ENCODE measurements at regions of chr1 and their contacts with region 1.

Region 1: DNA sequence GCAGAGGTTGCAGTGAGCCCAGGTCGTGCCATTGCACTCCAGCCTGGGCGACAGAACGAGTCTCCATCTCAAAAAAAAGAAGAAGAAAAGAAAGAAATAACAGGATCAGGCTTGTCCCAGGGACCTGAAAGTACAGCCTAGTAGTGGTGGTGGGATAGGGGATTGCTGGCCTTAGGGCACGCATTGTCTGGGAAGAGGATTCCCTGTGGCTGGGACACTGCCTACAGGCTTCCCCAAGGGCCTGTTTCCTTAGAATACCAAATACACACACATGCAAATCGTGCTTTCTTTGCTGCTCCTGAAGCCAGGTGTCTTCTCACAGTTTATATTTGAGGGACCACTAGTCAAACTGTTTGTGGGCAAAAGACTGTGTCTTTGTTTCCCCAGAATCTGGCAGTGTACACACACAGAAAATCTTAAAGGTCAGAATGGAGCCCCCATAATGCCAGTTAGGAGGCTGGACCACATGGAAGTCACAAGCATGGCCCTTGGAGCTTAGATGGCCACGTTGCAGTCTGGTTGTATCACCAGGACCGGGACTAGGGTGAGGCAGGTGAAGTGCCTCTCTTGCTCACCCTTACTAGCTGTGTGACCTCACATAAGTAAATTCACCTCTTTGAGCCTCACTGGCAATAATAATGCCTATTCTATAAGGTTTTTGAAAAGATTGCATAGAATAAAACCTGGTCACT is 12.7 kb upstream of the ASAP3 start:
- DNase-seq: no peak
- ATAC-seq: peak; percentile 55 to 70; a peak in 5 of 6 replicates
- H3K4me3 ChIP-seq: no peak overlapping the region
- H3K27ac ChIP-seq: no peak overlapping the region
- H3K4me1 ChIP-seq: no peaks in the 10 kb centered on the region
- CTCF ChIP-seq: no peak
- EP300 ChIP-seq: no peak
- POLR2A ChIP-seq: no peak
- RAD21 ChIP-seq: no peak

Region 2: DNA sequence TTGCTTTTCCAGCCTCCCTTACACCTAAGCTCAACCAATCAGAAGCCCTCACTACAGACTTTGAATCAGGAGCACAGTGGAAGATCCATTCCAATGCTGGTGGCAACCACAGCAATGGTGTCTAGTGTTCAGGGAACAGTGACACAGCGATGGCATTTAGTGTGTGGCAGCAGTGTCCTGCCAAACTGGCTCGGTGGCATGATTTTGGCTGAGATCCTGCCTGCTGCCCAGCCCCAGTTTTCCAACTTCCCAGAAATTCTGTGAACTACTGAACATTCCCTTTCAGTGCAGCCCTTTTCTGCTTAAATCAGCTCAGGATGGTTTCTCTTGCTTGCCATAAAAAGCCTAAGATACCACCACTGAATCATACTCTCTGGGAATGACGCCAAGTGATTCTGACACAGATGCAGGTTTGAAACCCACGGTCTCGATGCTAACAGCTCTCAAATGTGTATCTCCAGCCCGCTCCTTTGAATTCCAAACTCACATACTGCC is 21.5 kb before region 1 on chr1:
- CTCF ChIA-PET with region 1: interaction called, 12 read pairs
- POLR2A ChIA-PET with region 1: no interaction called
- DNase-seq: no peak
- ATAC-seq: peak in 1 of 2 experiments; percentile 37; a peak in 2 of 6 replicates
- H3K4me3 ChIP-seq: no peak overlapping the region
- H3K27ac ChIP-seq: no peak overlapping the region
- H3K4me1 ChIP-seq: peaks cover 22% of the 10 kb centered on the region
- CTCF ChIP-seq: no peak
- EP300 ChIP-seq: no peak
- POLR2A ChIP-seq: no peak
- RAD21 ChIP-seq: no peak

Region 3: GRCh38 chr1:23507507-23507906 is 10.9 kb after region 1 on chr1:
- CTCF ChIA-PET with region 1: interaction called, 55 read pairs
- POLR2A ChIA-PET with region 1: no interaction called
- DNase-seq: no peak
- ATAC-seq: peak in 1 of 2 experiments; percentile 36; a peak in 1 of 6 replicates
- H3K4me3 ChIP-seq: no peak overlapping the region
- H3K27ac ChIP-seq: no peak overlapping the region
- H3K4me1 ChIP-seq: no peaks in the 10 kb centered on the region
- CTCF ChIP-seq: no peak
- EP300 ChIP-seq: no peak
- POLR2A ChIP-seq: no peak
- RAD21 ChIP-seq: no peak

Region 4: GRCh38 chr1:23530747-23531561 is 34.3 kb after region 1 on chr1 and contains the start of gene E2F2:
- CTCF ChIA-PET with region 1: interaction called, 70 read pairs
- POLR2A ChIA-PET with region 1: no interaction called
- DNase-seq: peak; percentile 79 to 85
- ATAC-seq: peak; percentile 72 to 73
- H3K4me3 ChIP-seq: peak within 1 kb of the TSS; percentile 90
- H3K27ac ChIP-seq: peak within 1 kb of the TSS; percentile 76 to 94
- H3K4me1 ChIP-seq: peaks cover 53% of the 10 kb centered on the region
- CTCF ChIP-seq: no peak
- EP300 ChIP-seq: no peak
- POLR2A ChIP-seq: peak; percentile 29; the same call in 1 of the 2 replicates
- RAD21 ChIP-seq: no peak
- polyA plus RNA-seq, gene E2F2: 0.90 and 1.6 TPM in 2 replicates

Region 5: DNA sequence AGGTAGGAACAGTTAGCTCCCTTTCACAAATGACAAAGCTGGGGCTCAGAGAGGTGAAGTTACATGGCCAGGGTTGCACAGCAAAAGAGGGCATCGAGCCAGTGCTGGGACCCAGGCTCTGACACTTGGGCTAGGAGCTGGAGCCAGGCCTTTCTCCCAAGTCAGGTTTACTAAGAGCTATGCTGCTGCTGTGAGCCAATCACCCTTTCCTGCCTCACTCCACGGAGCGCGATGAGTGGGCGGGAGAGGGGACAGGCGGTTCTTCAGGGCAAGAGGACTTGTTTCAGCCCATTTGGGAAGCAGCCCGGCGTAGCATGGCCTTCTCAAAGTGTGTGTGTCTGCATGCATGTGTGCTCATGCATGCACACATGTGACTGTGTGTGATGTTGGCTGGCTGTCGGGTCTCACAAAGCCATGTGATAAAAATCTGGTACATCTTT is 52.1 kb after region 1 on chr1:
- CTCF ChIA-PET with region 1: interaction called, 11 read pairs
- POLR2A ChIA-PET with region 1: no interaction called
- DNase-seq: no peak
- ATAC-seq: no peak
- H3K4me3 ChIP-seq: no peak overlapping the region
- H3K27ac ChIP-seq: peak overlapping the region; percentile 75 to 88; a peak in 5 of 6 replicates
- H3K4me1 ChIP-seq: peaks cover 62% of the 10 kb centered on the region
- CTCF ChIP-seq: no peak
- EP300 ChIP-seq: no peak
- POLR2A ChIP-seq: no peak
- RAD21 ChIP-seq: no peak

Measured in A549 (cell line).